ENCODE measurements at regions of chr6 and their contacts with region 1.

Region 1: GRCh38 chr6:137013738-137014602 is 30.8 kb downstream of the IL20RA start:
- DNase-seq: peak; percentile 26
- ATAC-seq: peak; percentile 91
- H3K4me3 ChIP-seq: no peak overlapping the region
- H3K27ac ChIP-seq: no peak overlapping the region
- H3K4me1 ChIP-seq: no peaks in the 10 kb centered on the region
- H3K27me3 ChIP-seq: no peaks in the 10 kb centered on the region
- CTCF ChIP-seq: peak; percentile 59 to 81 (median 68)
- POLR2A ChIP-seq: no peak
- RAD21 ChIP-seq: peak; percentile 83

Region 2: DNA sequence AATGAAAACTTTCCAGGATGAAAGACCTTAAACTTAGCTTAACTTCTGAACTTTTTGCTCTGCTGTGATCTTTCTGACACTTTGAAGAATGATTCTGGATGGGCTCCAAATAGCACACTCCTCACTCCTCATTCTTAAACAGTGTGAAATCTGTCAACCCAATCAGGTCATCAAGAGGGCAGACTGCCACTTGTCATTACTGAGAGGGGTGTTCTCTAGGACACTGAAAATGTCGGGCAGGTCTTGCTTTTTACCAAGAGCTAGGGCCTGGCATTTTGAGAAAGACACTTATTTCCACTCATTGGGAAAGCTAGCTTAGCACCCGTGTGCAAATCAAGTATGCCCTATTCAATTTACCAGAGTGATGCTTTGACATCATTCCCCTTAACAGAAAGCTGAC is 886.1 kb before region 1 on chr6:
- CTCF ChIA-PET with region 1: no interaction called
- POLR2A ChIA-PET with region 1: no interaction called
- RAD21 ChIA-PET with region 1: no interaction called
- intact Hi-C with region 1: no loop called
- DNase-seq: no peak
- ATAC-seq: no peak
- H3K4me3 ChIP-seq: no peak overlapping the region
- H3K27ac ChIP-seq: no peak overlapping the region
- H3K4me1 ChIP-seq: no peaks in the 10 kb centered on the region
- H3K27me3 ChIP-seq: no peaks in the 10 kb centered on the region
- CTCF ChIP-seq: no peak
- POLR2A ChIP-seq: no peak
- RAD21 ChIP-seq: no peak

Region 3: DNA sequence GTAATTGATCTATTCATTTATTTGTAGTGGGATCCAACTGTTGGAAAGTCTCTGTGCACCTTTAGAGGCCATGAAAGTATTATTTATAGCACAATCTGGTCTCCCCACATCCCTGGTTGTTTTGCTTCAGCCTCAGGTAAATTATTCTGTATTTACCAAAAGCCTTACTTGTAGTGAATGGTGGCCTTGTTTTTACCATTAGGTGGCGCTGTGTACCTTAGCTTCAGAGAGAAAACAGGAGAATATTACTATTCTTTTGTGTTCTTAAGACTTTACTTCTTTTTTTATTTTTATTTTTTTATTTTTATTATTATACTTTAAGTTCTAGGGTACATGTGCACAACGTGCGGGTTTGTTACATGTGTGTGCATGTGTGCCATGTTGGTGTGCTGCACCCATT is 167.9 kb before region 1 on chr6:
- CTCF ChIA-PET with region 1: no interaction called
- POLR2A ChIA-PET with region 1: no interaction called
- RAD21 ChIA-PET with region 1: no interaction called
- intact Hi-C with region 1: loop called (anchors 10 kb)
- DNase-seq: peak; percentile 47
- ATAC-seq: peak; percentile 63
- H3K4me3 ChIP-seq: no peak overlapping the region
- H3K27ac ChIP-seq: no peak overlapping the region
- H3K4me1 ChIP-seq: no peaks in the 10 kb centered on the region
- H3K27me3 ChIP-seq: no peaks in the 10 kb centered on the region
- CTCF ChIP-seq: peak; percentile 40 to 71 (median 68); a peak in 5 of 6 replicates
- POLR2A ChIP-seq: no peak
- RAD21 ChIP-seq: peak; percentile 63

Region 4: GRCh38 chr6:136967876-136968752 is 45.9 kb before region 1 on chr6:
- CTCF ChIA-PET with region 1: interaction called, 6 read pairs
- POLR2A ChIA-PET with region 1: no interaction called
- RAD21 ChIA-PET with region 1: no interaction called
- intact Hi-C with region 1: loop called (anchors 1 kb)
- DNase-seq: peak; percentile 75
- ATAC-seq: peak; percentile 99
- H3K4me3 ChIP-seq: no peak overlapping the region; a peak in 1 of 4 replicates
- H3K27ac ChIP-seq: no peak overlapping the region
- H3K4me1 ChIP-seq: peaks cover 0 to 5% of the 10 kb centered on the region in 2 experiments; a peak in 2 of 4 replicates
- H3K27me3 ChIP-seq: no peaks in the 10 kb centered on the region
- CTCF ChIP-seq: peak; percentile 59 to 82 (median 76)
- POLR2A ChIP-seq: no peak
- RAD21 ChIP-seq: peak; percentile 87

Region 5: DNA sequence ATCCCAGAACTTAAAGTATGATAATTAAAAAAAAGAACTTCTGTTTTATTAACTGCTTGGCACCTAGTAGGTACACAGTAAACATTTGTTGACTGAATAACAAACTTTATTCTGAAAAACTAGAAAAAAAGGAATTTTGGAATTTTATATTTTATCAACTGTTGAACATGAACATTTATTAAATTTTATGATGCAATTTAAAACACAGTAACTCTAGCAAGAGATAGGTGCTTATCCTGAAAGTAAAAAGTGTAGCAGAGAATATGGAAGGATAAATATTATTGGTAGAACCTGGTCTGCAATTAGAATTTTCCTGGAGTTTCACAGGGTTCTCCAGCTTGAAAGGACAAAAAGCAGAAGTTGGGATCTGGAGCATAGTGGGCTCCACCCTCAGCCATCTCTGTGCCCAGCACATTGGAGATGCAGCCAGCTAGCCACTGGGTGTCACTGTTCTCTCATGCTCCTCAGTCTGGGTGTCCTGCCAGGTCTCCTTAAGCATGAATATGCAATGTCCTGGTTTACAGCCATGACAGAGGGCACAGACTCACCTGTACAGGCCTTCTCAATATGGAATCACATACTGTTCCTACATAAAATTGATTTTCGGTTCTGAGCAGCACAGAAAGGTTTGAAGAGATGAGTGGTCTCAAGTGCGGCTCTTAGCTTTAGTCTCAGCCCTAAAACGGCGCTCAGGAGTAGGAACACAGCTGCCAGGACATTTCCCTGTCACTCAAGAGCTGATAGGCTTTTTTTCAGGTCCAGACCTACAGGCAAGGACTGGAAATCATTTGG is 62.5 kb after region 1 on chr6:
- CTCF ChIA-PET with region 1: no interaction called
- POLR2A ChIA-PET with region 1: no interaction called
- RAD21 ChIA-PET with region 1: no interaction called
- intact Hi-C with region 1: no loop called
- DNase-seq: peak; percentile 82
- ATAC-seq: peak; percentile 100
- H3K4me3 ChIP-seq: no peak overlapping the region
- H3K27ac ChIP-seq: no peak overlapping the region
- H3K4me1 ChIP-seq: no peaks in the 10 kb centered on the region
- H3K27me3 ChIP-seq: no peaks in the 10 kb centered on the region
- CTCF ChIP-seq: peak; percentile 73 to 94 (median 90)
- POLR2A ChIP-seq: no peak
- RAD21 ChIP-seq: peak; percentile 92

Region 6: DNA sequence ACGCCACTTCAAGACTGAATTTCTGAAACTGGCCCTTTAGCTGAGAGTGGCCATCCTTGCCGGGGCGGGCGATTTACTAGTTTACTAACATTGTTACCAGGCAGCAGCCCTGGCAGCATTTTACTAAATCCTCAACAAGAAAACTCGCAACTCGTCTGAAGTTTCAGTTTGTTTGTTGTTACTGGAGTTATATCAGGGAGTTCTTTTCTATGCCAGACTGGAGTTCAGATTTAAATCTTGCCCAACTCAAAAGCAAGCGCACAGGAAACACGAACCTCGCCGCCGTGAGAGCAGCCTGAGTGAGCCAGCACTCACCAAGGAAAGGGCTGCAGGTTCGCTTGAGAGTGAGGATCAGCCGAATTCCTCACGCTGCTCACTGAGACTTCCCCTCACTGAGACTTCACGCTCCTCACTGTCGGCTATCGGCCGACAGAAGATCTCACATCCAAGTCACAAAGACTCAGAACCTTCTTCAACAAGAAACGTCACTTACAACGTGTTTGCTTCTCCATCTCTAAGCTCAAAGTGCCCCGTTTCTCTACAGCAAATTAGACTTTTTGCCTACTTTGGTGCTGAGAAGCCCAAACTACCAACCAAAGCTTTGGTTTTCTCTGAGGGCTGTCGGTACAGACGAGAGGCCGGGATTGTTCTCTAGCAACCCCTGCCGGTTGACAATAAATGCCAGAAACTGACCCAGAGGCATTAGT is 401.3 kb after region 1 on chr6:
- CTCF ChIA-PET with region 1: no interaction called
- POLR2A ChIA-PET with region 1: no interaction called
- RAD21 ChIA-PET with region 1: no interaction called
- intact Hi-C with region 1: no loop called
- DNase-seq: peak; percentile 28
- ATAC-seq: peak; percentile 96
- H3K4me3 ChIP-seq: no peak overlapping the region
- H3K27ac ChIP-seq: no peak overlapping the region
- H3K4me1 ChIP-seq: no peaks in the 10 kb centered on the region
- H3K27me3 ChIP-seq: no peaks in the 10 kb centered on the region
- CTCF ChIP-seq: peak; percentile 36 to 68 (median 63); a peak in 5 of 6 replicates
- POLR2A ChIP-seq: no peak
- RAD21 ChIP-seq: peak; percentile 53

Measured in HCT116 (cell line).